GM12878 (cell line): ENCODE measurements at regions of chr12 and their contacts with region 1.

Region 1: GRCh38 chr12:74957231-74957630 is 252.4 kb downstream of the KCNC2 start:
- DNase-seq: no peak
- ATAC-seq: peak; percentile 87
- H3K4me3 ChIP-seq: no peak overlapping the region
- H3K27ac ChIP-seq: no peak overlapping the region
- H3K4me1 ChIP-seq: no peaks in the 10 kb centered on the region
- H3K27me3 ChIP-seq: no peaks in the 10 kb centered on the region
- CTCF ChIP-seq: no peak
- EP300 ChIP-seq: no peak
- POLR2A ChIP-seq: no peak
- RAD21 ChIP-seq: no peak

Region 2: DNA sequence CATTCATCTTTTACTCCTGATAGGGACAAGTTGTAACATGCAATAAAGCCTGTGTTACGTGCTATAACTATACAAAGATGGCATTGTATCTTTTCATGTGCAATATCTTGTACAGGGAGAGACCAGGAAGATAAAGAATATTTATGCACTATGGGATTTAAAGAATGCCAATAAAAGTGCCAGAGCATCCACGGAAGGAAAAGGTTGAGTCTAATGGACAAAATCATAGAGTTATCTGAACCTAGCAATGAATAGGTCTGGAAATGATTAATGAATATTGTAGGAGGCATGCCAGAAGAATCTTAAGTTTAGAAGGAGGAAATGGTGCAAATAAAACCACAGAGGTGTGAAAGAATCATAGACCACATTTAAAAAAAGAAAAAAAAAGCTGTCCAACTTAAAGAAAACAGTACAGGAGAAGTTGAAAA is 11.4 kb before region 1 on chr12:
- CTCF ChIA-PET with region 1: interaction called, 3 read pairs
- POLR2A ChIA-PET with region 1: no interaction called
- RAD21 ChIA-PET with region 1: interaction called, 3 read pairs
- SMC1A ChIA-PET with region 1: interaction called, 16 read pairs
- in situ Hi-C with region 1: no loop called
- intact Hi-C with region 1: no loop called
- DNase-seq: no peak
- ATAC-seq: peak; percentile 77
- H3K4me3 ChIP-seq: no peak overlapping the region
- H3K27ac ChIP-seq: no peak overlapping the region
- H3K4me1 ChIP-seq: no peaks in the 10 kb centered on the region
- H3K27me3 ChIP-seq: no peaks in the 10 kb centered on the region
- CTCF ChIP-seq: no peak
- EP300 ChIP-seq: peak in 1 of 2 experiments; percentile 20; a peak in 1 of 4 replicates
- POLR2A ChIP-seq: no peak
- RAD21 ChIP-seq: no peak

Region 3: GRCh38 chr12:75048767-75049166 is 91.5 kb after region 1 on chr12:
- CTCF ChIA-PET with region 1: no interaction called
- POLR2A ChIA-PET with region 1: no interaction called
- RAD21 ChIA-PET with region 1: no interaction called
- SMC1A ChIA-PET with region 1: no interaction called
- in situ Hi-C with region 1: no loop called
- intact Hi-C with region 1: no loop called
- DNase-seq: no peak
- ATAC-seq: no peak
- H3K4me3 ChIP-seq: no peak overlapping the region
- H3K27ac ChIP-seq: no peak overlapping the region
- H3K4me1 ChIP-seq: no peaks in the 10 kb centered on the region
- H3K27me3 ChIP-seq: no peaks in the 10 kb centered on the region
- CTCF ChIP-seq: no peak
- EP300 ChIP-seq: no peak
- POLR2A ChIP-seq: no peak
- RAD21 ChIP-seq: no peak